HCT116 (cell line): ENCODE measurements at regions of chrX and their contacts with region 1.

Region 1: GRCh38 chrX:155026726-155027508 is at the start of gene FUNDC2:
- DNase-seq: peak; percentile 86
- ATAC-seq: peak; percentile 88
- H3K4me3 ChIP-seq: peak within 1 kb of the TSS; percentile 69 to 70
- H3K27ac ChIP-seq: peak within 1 kb of the TSS; percentile 95
- H3K4me1 ChIP-seq: peaks cover 8 to 19% of the 10 kb centered on the region in 2 experiments
- H3K27me3 ChIP-seq: no peaks in the 10 kb centered on the region
- CTCF ChIP-seq: no peak
- POLR2A ChIP-seq: peak; percentile 58
- RAD21 ChIP-seq: no peak
- total RNA-seq, gene FUNDC2: 32.5 TPM

Region 2: GRCh38 chrX:155070975-155071693 is 44.2 kb after region 1 on chrX and contains the starts of genes BRCC3, CMC4 and MTCP1:
- CTCF ChIA-PET with region 1: no interaction called
- POLR2A ChIA-PET with region 1: no interaction called
- RAD21 ChIA-PET with region 1: no interaction called
- intact Hi-C with region 1: loop called (anchors 2 kb)
- DNase-seq: peak; percentile 60
- ATAC-seq: peak; percentile 94
- H3K4me3 ChIP-seq: peak within 1 kb of the TSS; percentile 64 to 83
- H3K27ac ChIP-seq: peak within 1 kb of the TSS; percentile 45
- H3K4me1 ChIP-seq: peaks cover 15 to 30% of the 10 kb centered on the region in 2 experiments
- H3K27me3 ChIP-seq: no peaks in the 10 kb centered on the region
- CTCF ChIP-seq: no peak
- POLR2A ChIP-seq: peak; percentile 64
- RAD21 ChIP-seq: no peak
- total RNA-seq, gene BRCC3: 21.3 TPM
- total RNA-seq, gene CMC4: 5.3 TPM
- total RNA-seq, gene MTCP1: 10.7 TPM